Activated CD8-positive, alpha-beta memory T cell treated with anti-CD3 and anti-CD28 coated beads, Interleukin-2, amount 10 ng/mL, durations not matched to agents 7 days and 5 days (primary cell): ENCODE measurements at regions of chr17 and their contacts with region 1.

Region 1: GRCh38 chr17:7561028-7561575 is 617 bp upstream of the SENP3 start:
- DNase-seq: peak; percentile 91
- ATAC-seq: peak; percentile 75
- H3K4me3 Mint-ChIP-seq: peak overlapping the region; percentile 85
- H3K27ac Mint-ChIP-seq: peak overlapping the region; percentile 92
- H3K4me1 Mint-ChIP-seq: peaks cover 51% of the 10 kb centered on the region
- H3K27me3 Mint-ChIP-seq: no peaks in the 10 kb centered on the region

Region 2: GRCh38 chr17:7419819-7420610 is 141.1 kb before region 1 on chr17 and contains the start of gene SPEM1:
- CTCF ChIA-PET with region 1: no interaction called
- DNase-seq: no peak
- ATAC-seq: no peak
- H3K4me3 Mint-ChIP-seq: no peak within 1 kb of the TSS
- H3K27ac Mint-ChIP-seq: no peak within 1 kb of the TSS
- H3K4me1 Mint-ChIP-seq: no peaks in the 10 kb centered on the region
- H3K27me3 Mint-ChIP-seq: no peaks in the 10 kb centered on the region
- total RNA-seq, gene SPEM1: not detected

Region 3: GRCh38 chr17:7435221-7435675 is 125.9 kb before region 1 on chr17 and contains the start of gene TMEM102:
- CTCF ChIA-PET with region 1: interaction called, 44 read pairs
- DNase-seq: peak; percentile 99
- ATAC-seq: peak; percentile 81
- H3K4me3 Mint-ChIP-seq: peak within 1 kb of the TSS; percentile 86
- H3K27ac Mint-ChIP-seq: peak within 1 kb of the TSS; percentile 97
- H3K4me1 Mint-ChIP-seq: peaks cover 42% of the 10 kb centered on the region
- H3K27me3 Mint-ChIP-seq: peaks cover 12% of the 10 kb centered on the region
- total RNA-seq, gene TMEM102: 13.9 to 16.7 TPM

Region 4: GRCh38 chr17:7484067-7484918 is 76.8 kb before region 1 on chr17 and contains the start of gene POLR2A:
- CTCF ChIA-PET with region 1: interaction called, 22 read pairs
- DNase-seq: peak; percentile 98
- ATAC-seq: peak; percentile 69
- H3K4me3 Mint-ChIP-seq: peak within 1 kb of the TSS; percentile 90
- H3K27ac Mint-ChIP-seq: peak within 1 kb of the TSS; percentile 100
- H3K4me1 Mint-ChIP-seq: peaks cover 67% of the 10 kb centered on the region
- H3K27me3 Mint-ChIP-seq: no peaks in the 10 kb centered on the region
- total RNA-seq, gene POLR2A: 198 to 228 TPM

Region 5: DNA sequence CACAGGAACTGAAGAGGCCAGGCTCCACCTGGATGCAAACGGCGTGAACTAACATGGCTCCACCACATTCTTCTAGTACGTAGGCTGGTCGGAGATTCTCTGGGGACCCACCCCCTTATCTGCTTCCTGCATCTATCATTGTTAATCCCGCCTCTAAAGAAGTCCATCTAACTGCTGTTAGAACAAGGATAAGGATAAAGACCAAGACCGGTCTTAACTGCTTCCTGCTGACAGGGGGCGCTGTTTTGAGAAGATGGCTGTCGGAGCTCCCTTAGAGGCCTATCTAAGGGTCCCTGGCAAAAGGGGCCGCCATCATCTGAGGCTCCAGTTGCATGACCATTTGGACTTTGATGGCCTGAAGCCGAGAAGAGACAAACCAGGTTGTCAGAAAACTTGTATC is 38.1 kb before region 1 on chr17:
- CTCF ChIA-PET with region 1: interaction called, 172 read pairs
- DNase-seq: peak; percentile 50
- ATAC-seq: peak; percentile 60
- H3K4me3 Mint-ChIP-seq: no peak overlapping the region
- H3K27ac Mint-ChIP-seq: no peak overlapping the region
- H3K4me1 Mint-ChIP-seq: peaks cover 2% of the 10 kb centered on the region
- H3K27me3 Mint-ChIP-seq: no peaks in the 10 kb centered on the region

Region 6: GRCh38 chr17:7572588-7573323 is 11.7 kb after region 1 on chr17:
- CTCF ChIA-PET with region 1: interaction called, 19 read pairs
- DNase-seq: peak; percentile 100
- ATAC-seq: peak; percentile 9
- H3K4me3 Mint-ChIP-seq: peak overlapping the region; percentile 95
- H3K27ac Mint-ChIP-seq: peak overlapping the region; percentile 97
- H3K4me1 Mint-ChIP-seq: peaks cover 51% of the 10 kb centered on the region
- H3K27me3 Mint-ChIP-seq: no peaks in the 10 kb centered on the region

Region 7: GRCh38 chr17:7687908-7688807 is 127.1 kb after region 1 on chr17 and contains the start of gene WRAP53:
- CTCF ChIA-PET with region 1: interaction called, 25 read pairs
- DNase-seq: peak; percentile 98
- ATAC-seq: peak; percentile 82
- H3K4me3 Mint-ChIP-seq: peak within 1 kb of the TSS; percentile 96
- H3K27ac Mint-ChIP-seq: peak within 1 kb of the TSS; percentile 97
- H3K4me1 Mint-ChIP-seq: peaks cover 33% of the 10 kb centered on the region
- H3K27me3 Mint-ChIP-seq: no peaks in the 10 kb centered on the region
- total RNA-seq, gene WRAP53: 28.0 to 29.0 TPM